MCF 10A (cell line): ENCODE measurements at regions of chr5 and their contacts with region 1.

Region 1: GRCh38 chr5:143865426-143866025 is 53.6 kb downstream of the HMHB1 start:
- DNase-seq: no peak
- H3K4me3 Mint-ChIP-seq: no peak overlapping the region
- H3K27ac Mint-ChIP-seq: no peak overlapping the region
- H3K4me1 Mint-ChIP-seq: peaks cover 4% of the 10 kb centered on the region
- H3K27me3 Mint-ChIP-seq: no peaks in the 10 kb centered on the region
- CTCF ChIP-seq: no peak

Region 2: DNA sequence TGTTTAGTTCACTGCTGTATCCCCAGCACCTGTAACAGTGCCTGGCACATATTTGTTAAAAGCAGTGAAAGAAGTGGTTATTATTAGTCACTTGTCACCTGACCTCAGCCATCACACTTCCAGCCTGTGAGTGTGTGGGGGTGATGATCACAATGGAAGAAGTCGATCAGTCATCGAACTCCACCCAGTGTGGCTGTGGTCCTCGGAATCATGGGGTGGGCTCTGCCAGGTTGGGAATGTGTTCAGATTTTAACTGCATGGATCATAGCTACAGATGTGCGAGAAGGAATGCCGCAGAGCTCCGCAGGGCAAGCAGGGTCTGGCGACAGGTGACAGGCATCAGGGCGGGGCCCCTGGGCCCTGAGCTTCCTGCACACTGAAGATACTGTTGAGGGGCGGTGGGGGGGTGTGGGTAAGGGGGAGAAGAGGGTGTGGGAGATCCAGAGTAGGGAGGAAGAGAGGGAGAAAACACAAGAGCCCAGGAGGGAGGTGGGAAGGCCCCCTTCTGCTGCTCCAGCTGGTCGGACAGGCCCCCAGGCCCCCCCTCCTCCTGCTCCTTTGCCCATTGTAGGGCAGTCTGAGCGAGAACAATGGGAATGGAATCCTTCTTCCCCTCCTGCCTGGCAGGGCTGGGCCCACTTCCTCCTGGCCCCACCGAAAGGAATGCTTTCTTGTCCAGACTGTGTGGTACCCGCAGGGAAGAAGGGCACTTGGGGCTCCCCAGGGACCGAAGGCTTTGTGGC is 1630.3 kb before region 1 on chr5:
- CTCF ChIA-PET with region 1: no interaction called
- POLR2A ChIA-PET with region 1: no interaction called
- intact Hi-C with region 1: loop called (anchors 10 kb)
- DNase-seq: no peak
- H3K4me3 Mint-ChIP-seq: no peak overlapping the region
- H3K27ac Mint-ChIP-seq: no peak overlapping the region
- H3K4me1 Mint-ChIP-seq: peaks cover 5% of the 10 kb centered on the region
- H3K27me3 Mint-ChIP-seq: no peaks in the 10 kb centered on the region
- CTCF ChIP-seq: no peak

Region 3: DNA sequence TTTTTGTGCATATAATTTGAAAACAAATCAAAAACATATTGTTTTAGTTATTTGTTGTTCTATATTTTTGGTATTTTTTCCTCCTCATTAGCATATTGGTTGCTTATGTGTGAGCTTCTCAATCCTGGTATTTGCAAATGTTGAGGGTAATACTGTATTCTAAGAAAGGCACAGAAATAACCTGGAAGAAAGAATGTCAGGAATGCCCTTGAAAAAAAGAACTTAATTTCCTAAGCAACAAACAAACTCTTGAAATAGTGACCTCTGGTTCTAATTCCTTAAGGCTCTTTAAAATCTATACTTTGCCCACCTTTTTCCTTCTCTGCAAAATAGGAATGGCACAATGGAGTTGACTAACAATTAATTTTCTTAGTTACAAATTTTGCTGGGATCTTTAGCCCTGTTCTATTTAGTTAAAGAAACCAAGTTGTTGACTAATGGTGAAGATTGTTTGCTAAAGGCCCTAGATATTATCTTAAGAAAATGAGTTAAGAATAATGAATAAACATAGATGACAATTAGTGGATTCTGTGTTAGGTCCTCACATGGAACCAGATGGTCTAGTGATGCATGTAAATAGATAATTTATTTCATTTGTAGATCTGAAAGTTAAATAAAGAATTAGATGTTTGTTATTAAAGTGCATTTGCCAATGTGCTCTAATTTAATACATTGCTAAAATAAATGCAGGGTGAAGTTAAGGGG is 64.1 kb after region 1 on chr5:
- CTCF ChIA-PET with region 1: no interaction called
- POLR2A ChIA-PET with region 1: no interaction called
- intact Hi-C with region 1: no loop called
- DNase-seq: no peak
- H3K4me3 Mint-ChIP-seq: no peak overlapping the region
- H3K27ac Mint-ChIP-seq: no peak overlapping the region
- H3K4me1 Mint-ChIP-seq: peaks cover 34% of the 10 kb centered on the region
- H3K27me3 Mint-ChIP-seq: no peaks in the 10 kb centered on the region
- CTCF ChIP-seq: no peak